Naive thymus-derived CD4-positive, alpha-beta T cell (primary cell): ENCODE measurements at regions of chr1 and their contacts with region 1.

Region 1: GRCh38 chr1:159015440-159015909 is 5.8 kb downstream of the IFI16 start:
- DNase-seq: peak in 6 of 9 donors; percentile 17 to 58 (median 34)
- ATAC-seq: peak; percentile 95
- H3K4me3 ChIP-seq: peak overlapping the region; percentile 14
- H3K4me3 Mint-ChIP-seq: peak overlapping the region; percentile 53 to 95 (median 86)
- H3K27ac ChIP-seq: peak overlapping the region; percentile 14
- H3K27ac Mint-ChIP-seq: peak overlapping the region; percentile 71 to 93 (median 89)
- H3K4me1 ChIP-seq: peaks cover 28 to 29% of the 10 kb centered on the region in 2 donors
- H3K4me1 Mint-ChIP-seq: peaks cover 46 to 79% (median 71%) of the 10 kb centered on the region in 7 donors
- H3K27me3 ChIP-seq: no peaks in the 10 kb centered on the region
- H3K27me3 Mint-ChIP-seq: no peaks in the 10 kb centered on the region

Region 2: GRCh38 chr1:159030877-159031447 is 15.5 kb after region 1 on chr1:
- CTCF ChIA-PET with region 1: interaction called, 4 read pairs
- POLR2A ChIA-PET with region 1: no interaction called
- intact Hi-C with region 1: loop called (anchors 2 kb)
- DNase-seq: no peak
- ATAC-seq: no peak
- H3K4me3 ChIP-seq: no peak overlapping the region
- H3K4me3 Mint-ChIP-seq: peak overlapping the region in 1 of 10 donors; percentile 76
- H3K27ac ChIP-seq: no peak overlapping the region
- H3K27ac Mint-ChIP-seq: peak overlapping the region in 2 of 9 donors; percentile 40 to 68
- H3K4me1 ChIP-seq: peaks cover 0 to 8% of the 10 kb centered on the region in 2 donors
- H3K4me1 Mint-ChIP-seq: peaks cover 42 to 79% (median 55%) of the 10 kb centered on the region in 7 donors
- H3K27me3 ChIP-seq: no peaks in the 10 kb centered on the region
- H3K27me3 Mint-ChIP-seq: no peaks in the 10 kb centered on the region

Region 3: GRCh38 chr1:159054427-159054826 is 39.0 kb after region 1 on chr1:
- CTCF ChIA-PET with region 1: no interaction called
- POLR2A ChIA-PET with region 1: no interaction called
- intact Hi-C with region 1: loop called (anchors 5 kb)
- DNase-seq: no peak
- ATAC-seq: no peak
- H3K4me3 ChIP-seq: no peak overlapping the region
- H3K4me3 Mint-ChIP-seq: peak overlapping the region in 1 of 10 donors; percentile 6
- H3K27ac ChIP-seq: peak overlapping the region; percentile 9
- H3K27ac Mint-ChIP-seq: peak overlapping the region in 6 of 9 donors; percentile 14 to 82 (median 60)
- H3K4me1 ChIP-seq: peaks cover 0 to 12% of the 10 kb centered on the region in 2 donors
- H3K4me1 Mint-ChIP-seq: peaks cover 15 to 48% (median 28%) of the 10 kb centered on the region in 7 donors
- H3K27me3 ChIP-seq: no peaks in the 10 kb centered on the region
- H3K27me3 Mint-ChIP-seq: no peaks in the 10 kb centered on the region

Region 4: DNA sequence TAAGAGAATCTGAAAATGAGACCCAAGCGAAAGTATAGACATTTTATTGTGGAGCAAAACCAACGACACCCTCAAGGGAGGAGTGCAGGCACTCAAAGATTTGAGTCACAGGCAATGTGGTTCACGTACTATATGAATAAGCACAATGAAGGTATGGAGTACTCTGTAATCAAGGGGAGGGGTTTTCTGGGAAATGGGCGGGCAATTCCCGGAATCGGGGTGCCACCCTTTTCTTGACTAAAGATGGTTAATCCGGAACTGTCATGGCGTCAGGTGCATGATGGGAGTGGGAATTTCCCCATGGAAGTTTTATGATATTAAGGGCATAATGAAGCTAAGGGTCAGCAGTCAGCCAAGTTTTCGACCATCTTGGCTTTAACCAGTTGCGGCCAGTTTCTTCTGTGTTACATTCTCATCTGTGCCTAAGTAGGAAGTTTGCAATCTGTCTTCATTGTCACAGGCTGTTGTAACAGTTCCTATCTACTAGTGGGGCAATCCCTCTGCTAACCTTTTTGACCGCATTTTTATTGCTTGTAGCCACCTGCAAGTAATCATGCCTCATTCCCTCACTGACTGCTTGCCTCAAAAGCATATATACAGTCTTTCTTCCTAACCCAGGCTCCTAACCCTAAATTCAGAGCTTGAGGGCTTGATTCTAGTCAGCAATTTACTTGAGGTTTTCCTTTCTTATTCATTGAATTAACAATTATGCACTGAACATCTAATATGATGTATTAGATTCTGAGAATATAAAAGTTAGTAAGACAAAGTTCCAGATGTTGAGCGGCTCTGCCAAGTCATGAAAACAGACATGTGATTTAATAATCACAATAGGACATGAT is 61.9 kb after region 1 on chr1:
- CTCF ChIA-PET with region 1: no interaction called
- POLR2A ChIA-PET with region 1: no interaction called
- intact Hi-C with region 1: loop called in 1 of 2 experiments (anchors 1 kb)
- DNase-seq: peak in 2 of 9 donors; percentile 37 to 96
- ATAC-seq: peak; percentile 79
- H3K4me3 ChIP-seq: peak overlapping the region; percentile 38
- H3K4me3 Mint-ChIP-seq: peak overlapping the region in 3 of 10 donors; percentile 3 to 90 (median 38)
- H3K27ac ChIP-seq: peak overlapping the region; percentile 18
- H3K27ac Mint-ChIP-seq: peak overlapping the region in 3 of 9 donors; percentile 65 to 99 (median 65)
- H3K4me1 ChIP-seq: peaks cover 0 to 28% of the 10 kb centered on the region in 2 donors
- H3K4me1 Mint-ChIP-seq: peaks cover 0 to 40% (median 4%) of the 10 kb centered on the region in 7 donors
- H3K27me3 ChIP-seq: no peaks in the 10 kb centered on the region
- H3K27me3 Mint-ChIP-seq: peaks cover 0 to 3% (median 1%) of the 10 kb centered on the region in 5 donors